Calu3 (cell line): ENCODE measurements at regions of chrX and their contacts with region 1.

Region 1: DNA sequence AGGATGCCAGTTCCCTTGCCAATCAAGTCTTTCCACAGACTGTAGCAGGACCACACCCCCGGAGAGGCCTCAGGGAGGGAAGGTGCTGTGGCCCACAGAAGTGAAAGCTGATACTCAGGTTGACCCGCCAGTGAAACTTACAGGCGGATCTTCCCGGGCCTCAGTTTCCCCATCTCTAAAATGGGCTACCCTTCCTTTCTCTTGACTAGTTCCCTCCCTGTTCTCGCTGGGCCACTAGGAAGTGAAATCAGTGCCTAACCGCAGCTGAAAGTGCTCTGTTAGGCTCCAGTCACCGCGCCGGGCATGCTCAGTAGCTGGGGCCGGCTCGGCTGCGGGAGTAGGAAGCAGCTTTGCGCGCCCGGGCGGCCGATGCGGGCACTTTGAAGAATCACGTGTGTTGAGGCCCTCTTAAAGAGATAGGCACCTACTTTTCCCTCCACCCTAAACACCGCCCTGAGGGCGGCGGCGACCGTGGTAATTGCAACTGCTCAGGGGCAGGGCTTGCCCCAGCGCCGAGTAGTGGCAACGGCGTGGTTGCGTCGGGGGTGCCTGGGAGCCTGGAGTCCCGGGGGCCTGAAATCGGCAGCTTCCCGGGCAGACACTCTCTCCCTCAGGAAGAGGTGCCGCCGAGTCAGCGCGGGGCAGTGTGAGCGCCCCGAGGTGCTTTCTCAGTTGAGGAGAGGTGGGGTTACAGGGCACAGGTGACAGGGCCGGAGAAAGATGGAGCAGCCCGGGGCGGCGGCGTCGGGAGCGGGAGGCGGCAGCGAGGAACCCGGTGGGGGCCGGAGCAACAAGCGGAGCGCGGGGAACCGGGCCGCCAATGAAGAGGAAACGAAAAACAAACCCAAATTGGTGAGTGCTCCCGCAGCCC is at the start of gene DIAPH2:
- DNase-seq: peak; percentile 84
- H3K4me3 Mint-ChIP-seq: peak within 1 kb of the TSS; percentile 100
- H3K27ac Mint-ChIP-seq: peak within 1 kb of the TSS; percentile 93
- H3K4me1 Mint-ChIP-seq: peaks cover 11% of the 10 kb centered on the region
- H3K27me3 Mint-ChIP-seq: no peaks in the 10 kb centered on the region
- CTCF ChIP-seq: no peak
- total RNA-seq, gene DIAPH2: 20.9 and 24.2 TPM in 2 replicates

Region 2: DNA sequence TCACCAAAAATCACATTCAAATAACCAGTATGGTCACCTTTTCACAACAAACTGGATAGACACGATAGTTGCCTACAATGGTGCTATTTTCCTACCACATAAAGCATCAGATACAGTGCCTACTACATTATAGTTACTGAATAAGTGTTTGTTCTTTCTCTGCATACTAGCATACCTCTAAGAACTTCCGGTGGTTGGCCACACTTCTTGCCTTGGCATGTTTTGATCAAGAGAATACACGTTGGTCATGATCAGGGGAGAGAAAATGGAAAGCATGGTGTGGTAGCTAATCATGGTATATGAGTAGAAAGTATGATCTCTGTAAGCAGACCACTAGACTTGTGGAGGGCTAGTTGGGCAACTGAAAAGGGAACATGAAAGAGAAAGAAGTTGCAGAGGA is 322.7 kb before region 1 on chrX:
- CTCF ChIA-PET with region 1: no interaction called
- intact Hi-C with region 1: no loop called
- DNase-seq: no peak
- H3K4me3 Mint-ChIP-seq: no peak overlapping the region
- H3K27ac Mint-ChIP-seq: no peak overlapping the region
- H3K4me1 Mint-ChIP-seq: no peaks in the 10 kb centered on the region
- H3K27me3 Mint-ChIP-seq: no peaks in the 10 kb centered on the region
- CTCF ChIP-seq: no peak

Region 3: DNA sequence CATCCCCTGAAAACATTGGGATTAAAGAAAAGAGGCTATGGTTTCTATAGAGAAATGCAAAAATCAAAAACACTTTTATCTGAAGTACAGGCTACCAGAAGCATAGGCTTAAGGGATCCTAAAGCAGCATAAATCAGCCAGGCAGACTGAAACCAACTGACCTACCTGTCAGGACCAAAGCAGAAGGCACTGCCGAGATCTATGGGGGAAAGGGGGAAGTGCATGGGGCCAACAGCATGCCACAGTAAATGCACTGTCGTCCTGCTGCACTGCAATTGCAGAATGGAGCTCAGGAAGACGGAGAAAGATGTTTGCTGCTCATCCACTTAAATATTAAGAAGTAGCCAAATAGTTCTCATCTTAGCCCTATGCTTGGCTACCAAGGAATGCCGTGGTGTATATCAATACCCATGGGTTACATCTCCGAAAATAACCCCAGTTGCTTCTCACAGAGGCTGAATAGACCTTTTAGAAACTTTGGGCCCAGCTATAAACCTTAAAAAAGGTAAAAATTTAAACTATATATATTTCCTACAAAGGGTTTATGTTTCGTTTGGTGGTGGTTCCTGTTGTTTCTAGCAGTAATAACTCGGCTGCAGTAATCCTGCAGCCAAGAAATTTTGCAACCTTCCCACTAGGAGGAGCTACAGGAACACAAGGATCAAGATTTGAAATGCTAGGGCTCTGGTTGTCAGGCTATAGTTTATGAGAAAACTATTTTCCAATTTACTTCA is 312.1 kb before region 1 on chrX:
- CTCF ChIA-PET with region 1: no interaction called
- intact Hi-C with region 1: loop called (anchors 5 kb)
- DNase-seq: peak; percentile 24
- H3K4me3 Mint-ChIP-seq: no peak overlapping the region
- H3K27ac Mint-ChIP-seq: no peak overlapping the region
- H3K4me1 Mint-ChIP-seq: no peaks in the 10 kb centered on the region
- H3K27me3 Mint-ChIP-seq: no peaks in the 10 kb centered on the region
- CTCF ChIP-seq: peak; percentile 43

Region 4: GRCh38 chrX:96407057-96407456 is 277.5 kb before region 1 on chrX:
- CTCF ChIA-PET with region 1: no interaction called
- intact Hi-C with region 1: loop called (anchors 10 kb)
- DNase-seq: peak; percentile 30
- H3K4me3 Mint-ChIP-seq: no peak overlapping the region
- H3K27ac Mint-ChIP-seq: peak overlapping the region; percentile 22
- H3K4me1 Mint-ChIP-seq: peaks cover 43% of the 10 kb centered on the region
- H3K27me3 Mint-ChIP-seq: no peaks in the 10 kb centered on the region
- CTCF ChIP-seq: no peak

Region 5: DNA sequence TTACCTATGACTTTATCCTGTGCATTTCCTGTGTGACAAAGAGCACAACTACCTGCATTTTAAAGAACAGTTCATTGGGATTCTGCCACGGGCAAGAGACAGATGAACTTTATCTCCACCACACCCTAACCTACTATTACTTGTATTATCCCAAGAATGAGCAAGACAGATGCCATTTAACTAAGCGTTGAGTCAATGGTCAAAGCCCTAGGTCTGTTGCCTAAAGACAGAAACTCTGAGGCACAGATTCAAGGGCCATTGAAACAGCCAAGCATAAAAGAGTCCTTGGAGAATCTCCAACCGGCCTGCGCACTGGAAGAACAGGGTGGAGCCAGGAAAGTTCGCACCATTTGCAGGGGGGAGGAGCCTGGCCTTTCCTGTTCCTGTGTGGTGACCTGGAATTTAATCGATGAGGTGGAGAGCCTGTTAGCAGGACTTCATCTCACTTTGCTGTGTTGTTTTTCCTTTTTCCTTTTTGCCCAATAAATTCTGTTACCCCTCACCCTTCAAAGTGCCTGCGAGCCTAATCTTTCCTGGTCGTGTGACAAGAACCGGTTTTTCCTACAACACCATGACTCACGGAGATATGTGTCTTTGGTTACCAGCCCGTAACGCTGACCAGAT is 146.4 kb before region 1 on chrX:
- CTCF ChIA-PET with region 1: no interaction called
- intact Hi-C with region 1: loop called (anchors 5 kb)
- DNase-seq: peak; percentile 59
- H3K4me3 Mint-ChIP-seq: peak overlapping the region; percentile 69
- H3K27ac Mint-ChIP-seq: peak overlapping the region; percentile 96
- H3K4me1 Mint-ChIP-seq: peaks cover 13% of the 10 kb centered on the region
- H3K27me3 Mint-ChIP-seq: no peaks in the 10 kb centered on the region
- CTCF ChIP-seq: no peak

Region 6: GRCh38 chrX:96752781-96753180 is 68.2 kb after region 1 on chrX:
- CTCF ChIA-PET with region 1: interaction called, 3 read pairs
- intact Hi-C with region 1: loop called (anchors 5 kb)
- DNase-seq: peak; percentile 23
- H3K4me3 Mint-ChIP-seq: peak overlapping the region; percentile 6
- H3K27ac Mint-ChIP-seq: peak overlapping the region; percentile 91
- H3K4me1 Mint-ChIP-seq: peaks cover 21% of the 10 kb centered on the region
- H3K27me3 Mint-ChIP-seq: no peaks in the 10 kb centered on the region
- CTCF ChIP-seq: no peak

Region 7: DNA sequence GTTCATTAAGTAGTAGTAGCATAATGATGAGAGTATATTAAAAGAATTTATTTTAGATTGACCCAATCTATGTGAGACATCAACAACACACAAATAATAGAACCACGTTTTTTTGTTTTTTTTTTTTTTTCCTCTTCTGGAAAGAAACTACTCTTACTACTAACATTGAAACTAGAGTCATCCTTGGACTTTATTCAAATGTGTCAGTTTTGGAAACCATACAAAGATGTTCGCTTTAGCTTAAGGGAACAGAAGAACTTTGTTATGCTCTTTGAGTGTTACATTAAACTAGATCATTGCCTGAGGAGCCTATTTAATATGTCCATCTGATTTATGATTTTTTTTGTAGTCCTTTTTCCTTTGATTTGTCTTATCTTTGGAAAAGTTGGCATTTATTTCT is 365.8 kb after region 1 on chrX:
- CTCF ChIA-PET with region 1: no interaction called
- intact Hi-C with region 1: no loop called
- DNase-seq: no peak
- H3K4me3 Mint-ChIP-seq: no peak overlapping the region
- H3K27ac Mint-ChIP-seq: no peak overlapping the region
- H3K4me1 Mint-ChIP-seq: peaks cover 4% of the 10 kb centered on the region
- H3K27me3 Mint-ChIP-seq: no peaks in the 10 kb centered on the region
- CTCF ChIP-seq: no peak